ENCODE measurements at regions of chrX and their contacts with region 1.

Region 1: DNA sequence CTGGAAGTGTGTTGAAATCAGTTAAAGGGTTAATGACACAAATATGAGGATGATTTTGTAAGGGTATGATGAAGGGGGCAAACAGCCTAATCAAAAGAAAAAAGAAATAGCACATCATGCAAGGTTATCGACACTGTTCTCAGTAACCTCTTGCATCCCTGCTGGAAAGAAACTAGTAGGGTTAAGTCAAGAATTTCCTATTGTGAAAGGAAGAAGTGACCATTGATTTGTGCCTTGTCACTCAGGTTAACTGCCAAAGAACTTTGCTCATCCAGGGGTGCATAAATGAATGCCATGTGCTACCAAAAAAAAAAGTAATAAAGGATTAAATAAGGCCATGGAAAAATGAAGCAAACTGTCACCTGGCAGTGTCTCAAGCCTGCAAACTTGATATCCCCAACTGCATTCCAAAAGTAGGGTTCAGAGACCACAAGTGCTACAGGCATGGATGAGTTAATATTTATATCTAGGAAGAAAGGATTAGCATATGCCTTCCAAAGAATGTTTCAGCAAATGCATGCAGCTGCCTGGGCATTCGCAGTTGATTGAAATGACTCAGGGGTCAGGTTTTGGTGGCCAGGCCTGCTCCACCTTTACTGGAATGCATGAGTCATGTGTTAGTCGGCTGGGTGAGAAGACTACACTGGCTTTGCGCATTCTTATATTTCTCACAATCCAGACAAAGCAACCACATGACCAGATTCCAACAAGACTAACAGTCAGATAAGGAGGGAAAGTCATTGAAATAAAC is 78.4 kb upstream of the ATXN3L start:
- DNase-seq: peak; percentile 84 to 91
- H3K4me3 ChIP-seq: no peak overlapping the region
- H3K4me3 Mint-ChIP-seq: peak overlapping the region; percentile 40
- H3K27ac Mint-ChIP-seq: peak overlapping the region; percentile 83
- H3K4me1 ChIP-seq: peaks cover 20% of the 10 kb centered on the region
- H3K4me1 Mint-ChIP-seq: peaks cover 18% of the 10 kb centered on the region
- H3K27me3 ChIP-seq: no peaks in the 10 kb centered on the region
- H3K27me3 Mint-ChIP-seq: no peaks in the 10 kb centered on the region
- CTCF ChIP-seq: no peak

Region 2: GRCh38 chrX:12946838-12947544 is 451.3 kb before region 1 on chrX:
- CTCF ChIA-PET with region 1: no interaction called
- POLR2A ChIA-PET with region 1: no interaction called
- intact Hi-C with region 1: loop called (anchors 1 kb)
- DNase-seq: peak; percentile 77 to 81
- H3K4me3 ChIP-seq: no peak overlapping the region
- H3K4me3 Mint-ChIP-seq: no peak overlapping the region
- H3K27ac Mint-ChIP-seq: peak overlapping the region; percentile 81
- H3K4me1 ChIP-seq: peaks cover 24% of the 10 kb centered on the region
- H3K4me1 Mint-ChIP-seq: no peaks in the 10 kb centered on the region
- H3K27me3 ChIP-seq: no peaks in the 10 kb centered on the region
- H3K27me3 Mint-ChIP-seq: no peaks in the 10 kb centered on the region
- CTCF ChIP-seq: peak; percentile 83 to 86

Region 3: DNA sequence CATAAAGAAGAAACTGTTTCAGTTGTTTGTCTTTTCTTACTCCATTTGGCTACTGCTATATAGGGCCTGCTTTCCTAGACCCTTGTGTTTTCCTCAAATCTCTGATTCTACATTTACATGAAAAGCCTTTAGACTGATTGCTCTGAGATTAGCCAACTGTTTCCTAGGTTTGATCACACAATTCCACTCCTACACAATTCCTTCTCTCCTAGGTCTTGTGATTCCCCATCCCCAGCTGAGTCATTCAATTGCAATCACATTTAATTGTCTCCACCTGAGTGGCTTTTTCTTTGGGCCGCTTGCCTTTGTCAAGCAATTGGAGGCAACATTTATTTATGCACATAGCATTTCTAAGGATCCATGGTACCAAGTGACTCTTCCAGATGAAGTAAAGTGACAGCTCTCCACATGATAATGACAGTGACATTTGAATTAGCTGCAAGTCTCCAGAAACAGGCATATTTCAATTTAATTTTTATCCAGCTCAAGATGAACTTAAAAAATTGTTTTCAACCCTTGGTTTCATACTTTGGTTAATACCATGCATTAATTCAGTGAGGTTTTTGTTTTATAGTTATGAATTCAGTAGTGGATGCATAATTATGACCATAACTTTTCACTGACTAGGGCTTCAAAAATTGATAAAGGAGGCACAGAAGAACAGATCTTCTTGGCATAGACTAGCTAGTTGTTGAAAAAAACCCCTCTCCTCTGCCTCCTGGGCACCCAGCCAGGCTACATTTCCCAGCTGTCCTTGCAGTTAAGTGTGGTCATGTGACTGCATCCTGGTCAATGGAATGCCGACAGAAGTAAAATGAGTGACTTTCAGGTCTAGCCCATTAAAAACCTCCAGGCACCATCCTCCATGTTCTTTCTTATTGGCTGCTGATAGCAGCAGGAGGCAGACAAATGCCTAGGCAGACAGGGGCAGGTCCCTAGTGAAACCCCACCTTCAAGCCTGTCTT is 114.0 kb before region 1 on chrX:
- CTCF ChIA-PET with region 1: no interaction called
- POLR2A ChIA-PET with region 1: no interaction called
- intact Hi-C with region 1: loop called (anchors 1 kb)
- DNase-seq: no peak
- H3K4me3 ChIP-seq: no peak overlapping the region
- H3K4me3 Mint-ChIP-seq: no peak overlapping the region
- H3K27ac Mint-ChIP-seq: no peak overlapping the region
- H3K4me1 ChIP-seq: peaks cover 27% of the 10 kb centered on the region
- H3K4me1 Mint-ChIP-seq: peaks cover 9% of the 10 kb centered on the region
- H3K27me3 ChIP-seq: no peaks in the 10 kb centered on the region
- H3K27me3 Mint-ChIP-seq: no peaks in the 10 kb centered on the region
- CTCF ChIP-seq: no peak

Region 4: GRCh38 chrX:13357925-13358324 is 40.3 kb before region 1 on chrX:
- CTCF ChIA-PET with region 1: no interaction called
- POLR2A ChIA-PET with region 1: no interaction called
- intact Hi-C with region 1: no loop called
- DNase-seq: no peak
- H3K4me3 ChIP-seq: no peak overlapping the region
- H3K4me3 Mint-ChIP-seq: no peak overlapping the region
- H3K27ac Mint-ChIP-seq: peak overlapping the region; percentile 67
- H3K4me1 ChIP-seq: no peaks in the 10 kb centered on the region
- H3K4me1 Mint-ChIP-seq: peaks cover 11% of the 10 kb centered on the region
- H3K27me3 ChIP-seq: no peaks in the 10 kb centered on the region
- H3K27me3 Mint-ChIP-seq: no peaks in the 10 kb centered on the region
- CTCF ChIP-seq: no peak

Measured in Caco-2 (cell line).